CD4-positive, alpha-beta memory T cell (primary cell): ENCODE measurements at regions of chr19 and their contacts with region 1.

Region 1: DNA sequence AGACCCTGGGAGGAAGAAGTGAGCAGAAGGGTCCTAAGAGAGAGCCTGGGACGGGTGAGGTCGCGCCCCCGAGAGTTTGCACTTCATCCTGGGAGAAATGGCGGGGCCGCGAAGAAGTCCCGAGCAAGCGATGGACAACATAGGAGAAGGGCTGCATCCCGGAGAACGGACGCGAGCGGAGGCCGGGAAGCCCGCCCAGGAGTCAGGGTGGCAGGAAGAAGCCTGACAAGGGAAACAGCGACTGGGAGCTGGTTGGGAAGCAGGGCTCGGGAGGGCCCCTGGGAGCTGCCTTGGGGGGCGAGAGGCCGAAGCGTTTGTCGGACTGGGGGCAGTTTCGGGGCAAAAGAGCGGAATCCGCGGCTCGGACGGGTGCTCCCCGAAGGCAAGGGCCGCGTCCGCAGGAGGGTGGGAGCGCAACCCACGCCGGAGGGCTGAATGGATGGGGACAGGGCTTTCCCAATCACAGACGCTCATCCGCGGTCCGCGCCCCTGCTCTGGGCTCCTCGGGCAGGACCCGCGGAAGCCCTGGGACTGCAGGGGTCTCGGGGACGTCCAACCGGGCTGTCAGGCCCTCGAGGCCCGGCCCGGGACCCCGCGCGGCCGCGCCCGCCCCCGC is 469 bp downstream of the ABHD17A start:
- DNase-seq: peak in 1 of 5 donors; percentile 40
- H3K4me3 ChIP-seq: peak overlapping the region; percentile 69 to 93
- H3K4me3 Mint-ChIP-seq: peak overlapping the region; percentile 98 to 100 (median 100)
- H3K27ac ChIP-seq: peak overlapping the region; percentile 95
- H3K27ac Mint-ChIP-seq: peak overlapping the region; percentile 98 to 100 (median 99)
- H3K4me1 ChIP-seq: peaks cover 42% of the 10 kb centered on the region
- H3K4me1 Mint-ChIP-seq: peaks cover 13 to 43% (median 28%) of the 10 kb centered on the region in 4 donors
- H3K27me3 ChIP-seq: no peaks in the 10 kb centered on the region
- H3K27me3 Mint-ChIP-seq: peaks cover 0 to 3% of the 10 kb centered on the region in 2 donors

Region 2: DNA sequence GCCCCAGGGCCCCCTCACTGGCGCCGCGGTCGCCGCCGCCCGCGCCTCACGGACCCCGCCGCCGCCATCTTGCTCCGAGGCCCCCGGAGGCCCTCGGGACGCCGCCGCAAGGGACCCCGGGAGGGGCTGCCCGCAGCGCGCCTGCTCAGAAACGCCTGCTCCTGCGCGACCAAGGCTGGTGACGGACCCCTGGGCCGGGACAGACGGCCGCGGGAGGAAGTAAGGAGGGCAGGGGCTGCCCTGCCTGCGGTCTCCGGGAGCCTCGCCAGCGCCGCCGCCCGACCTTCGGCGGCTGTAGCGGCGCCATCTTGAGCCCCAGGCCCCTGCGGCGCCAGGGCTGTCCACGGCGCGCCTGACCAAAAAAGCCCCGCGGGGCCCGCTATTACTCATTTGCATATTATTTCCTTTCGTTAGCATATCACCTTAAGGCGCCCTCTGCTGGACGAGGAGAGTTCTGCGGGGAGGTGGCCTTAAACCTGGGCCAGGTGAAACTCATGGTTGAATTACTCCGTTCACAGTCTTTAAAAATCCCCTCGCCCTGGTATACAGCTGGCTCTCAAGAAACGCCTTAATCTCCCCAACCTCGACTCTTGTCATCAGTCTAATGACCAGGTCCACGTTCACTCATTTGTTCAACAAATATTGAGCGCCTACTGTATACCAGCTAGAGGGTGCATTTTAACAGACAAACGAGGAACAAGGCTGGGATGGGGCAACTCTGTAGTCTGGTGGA is 36.3 kb before region 1 on chr19 and contains the start of gene REXO1:
- CTCF ChIA-PET with region 1: interaction called, 3 read pairs
- POLR2A ChIA-PET with region 1: no interaction called
- intact Hi-C with region 1: loop called (anchors 2 kb)
- DNase-seq: peak; percentile 97 to 100 (median 98)
- H3K4me3 ChIP-seq: peak within 1 kb of the TSS; percentile 73 to 92
- H3K4me3 Mint-ChIP-seq: peak within 1 kb of the TSS; percentile 87 to 93 (median 90)
- H3K27ac ChIP-seq: peak within 1 kb of the TSS; percentile 93
- H3K27ac Mint-ChIP-seq: peak within 1 kb of the TSS; percentile 91 to 94 (median 94)
- H3K4me1 ChIP-seq: peaks cover 75% of the 10 kb centered on the region
- H3K4me1 Mint-ChIP-seq: peaks cover 31 to 75% (median 50%) of the 10 kb centered on the region in 4 donors
- H3K27me3 ChIP-seq: no peaks in the 10 kb centered on the region
- H3K27me3 Mint-ChIP-seq: no peaks in the 10 kb centered on the region
- total RNA-seq, gene REXO1: 57.1 to 57.3 TPM

Region 3: GRCh38 chr19:1855040-1855827 is 29.6 kb before region 1 on chr19:
- CTCF ChIA-PET with region 1: interaction called, 3 read pairs
- POLR2A ChIA-PET with region 1: interaction called, 41 read pairs
- intact Hi-C with region 1: no loop called
- DNase-seq: peak; percentile 81 to 85 (median 84)
- H3K4me3 ChIP-seq: peak overlapping the region; percentile 67 to 77
- H3K4me3 Mint-ChIP-seq: peak overlapping the region; percentile 82 to 89 (median 86)
- H3K27ac ChIP-seq: peak overlapping the region; percentile 73
- H3K27ac Mint-ChIP-seq: peak overlapping the region; percentile 89 to 94 (median 93)
- H3K4me1 ChIP-seq: peaks cover 86% of the 10 kb centered on the region
- H3K4me1 Mint-ChIP-seq: peaks cover 25 to 72% (median 45%) of the 10 kb centered on the region in 4 donors
- H3K27me3 ChIP-seq: no peaks in the 10 kb centered on the region
- H3K27me3 Mint-ChIP-seq: no peaks in the 10 kb centered on the region

Region 4: GRCh38 chr19:1896508-1896907 is 11.7 kb after region 1 on chr19:
- CTCF ChIA-PET with region 1: interaction called, 9 read pairs
- POLR2A ChIA-PET with region 1: interaction called, 81 read pairs
- intact Hi-C with region 1: loop called (anchors 1 kb)
- DNase-seq: peak in 1 of 5 donors; percentile 36
- H3K4me3 ChIP-seq: no peak overlapping the region
- H3K4me3 Mint-ChIP-seq: peak overlapping the region; percentile 88 to 93 (median 90)
- H3K27ac ChIP-seq: peak overlapping the region; percentile 9
- H3K27ac Mint-ChIP-seq: peak overlapping the region in 4 of 7 donors; percentile 42 to 97 (median 75)
- H3K4me1 ChIP-seq: peaks cover 40% of the 10 kb centered on the region
- H3K4me1 Mint-ChIP-seq: peaks cover 10 to 45% (median 22%) of the 10 kb centered on the region in 4 donors
- H3K27me3 ChIP-seq: no peaks in the 10 kb centered on the region
- H3K27me3 Mint-ChIP-seq: no peaks in the 10 kb centered on the region